ENCODE measurements at regions of chr3 and their contacts with region 1.

Region 1: DNA sequence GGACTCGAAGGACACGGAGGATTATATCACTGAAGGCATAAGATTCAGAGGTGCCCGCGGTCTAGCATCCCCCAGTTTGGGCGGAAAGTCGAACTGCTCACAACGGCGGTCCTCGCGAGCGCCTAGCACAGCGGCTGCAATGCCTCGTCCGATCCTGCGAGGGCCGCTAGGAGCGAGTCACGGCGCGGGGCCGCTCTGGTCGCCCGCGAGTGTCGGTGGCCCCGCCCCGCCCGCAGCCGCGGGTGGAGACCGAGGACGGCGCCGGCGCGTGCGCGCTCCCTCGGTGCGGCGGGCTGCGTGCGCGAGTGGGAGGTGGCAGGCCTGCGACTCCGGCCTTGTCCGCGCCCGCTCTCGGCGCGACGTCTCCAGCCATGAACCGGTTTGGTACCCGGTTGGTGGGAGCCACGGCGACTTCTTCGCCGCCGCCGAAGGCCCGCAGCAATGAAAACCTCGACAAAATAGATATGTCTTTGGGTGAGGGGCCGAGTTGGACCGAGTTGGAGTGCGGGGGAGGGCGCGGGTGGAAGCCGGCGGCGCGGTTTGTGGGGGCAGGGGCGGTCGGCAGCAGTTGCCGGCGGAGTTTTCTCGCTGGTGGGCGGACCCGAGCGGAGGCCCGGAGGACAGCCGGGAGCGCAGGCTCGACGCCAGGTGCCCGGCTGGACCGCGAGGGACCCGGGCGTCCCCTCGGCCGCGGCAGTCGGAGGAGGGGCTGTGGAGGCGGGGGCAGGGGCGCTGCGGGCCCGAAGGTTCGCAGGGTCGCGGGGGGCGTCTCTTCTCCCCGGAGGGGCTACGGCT is at the start of gene FYTTD1:
- DNase-seq: peak; percentile 95
- ATAC-seq: peak; percentile 91
- H3K4me3 Mint-ChIP-seq: peak within 1 kb of the TSS; percentile 97
- H3K27ac Mint-ChIP-seq: peak within 1 kb of the TSS; percentile 94
- H3K4me1 Mint-ChIP-seq: peaks cover 42% of the 10 kb centered on the region
- H3K27me3 Mint-ChIP-seq: no peaks in the 10 kb centered on the region
- CTCF ChIP-seq: no peak
- total RNA-seq, gene FYTTD1: 78.6 and 84.2 TPM in 2 replicates

Region 2: GRCh38 chr3:197599089-197599765 is 150.6 kb before region 1 on chr3:
- CTCF ChIA-PET with region 1: no interaction called
- POLR2A ChIA-PET with region 1: no interaction called
- intact Hi-C with region 1: loop called (anchors 1 kb)
- DNase-seq: peak; percentile 57
- ATAC-seq: peak; percentile 98
- H3K4me3 Mint-ChIP-seq: no peak overlapping the region
- H3K27ac Mint-ChIP-seq: no peak overlapping the region
- H3K4me1 Mint-ChIP-seq: peaks cover 9% of the 10 kb centered on the region
- H3K27me3 Mint-ChIP-seq: no peaks in the 10 kb centered on the region
- CTCF ChIP-seq: peak; percentile 21

Region 3: DNA sequence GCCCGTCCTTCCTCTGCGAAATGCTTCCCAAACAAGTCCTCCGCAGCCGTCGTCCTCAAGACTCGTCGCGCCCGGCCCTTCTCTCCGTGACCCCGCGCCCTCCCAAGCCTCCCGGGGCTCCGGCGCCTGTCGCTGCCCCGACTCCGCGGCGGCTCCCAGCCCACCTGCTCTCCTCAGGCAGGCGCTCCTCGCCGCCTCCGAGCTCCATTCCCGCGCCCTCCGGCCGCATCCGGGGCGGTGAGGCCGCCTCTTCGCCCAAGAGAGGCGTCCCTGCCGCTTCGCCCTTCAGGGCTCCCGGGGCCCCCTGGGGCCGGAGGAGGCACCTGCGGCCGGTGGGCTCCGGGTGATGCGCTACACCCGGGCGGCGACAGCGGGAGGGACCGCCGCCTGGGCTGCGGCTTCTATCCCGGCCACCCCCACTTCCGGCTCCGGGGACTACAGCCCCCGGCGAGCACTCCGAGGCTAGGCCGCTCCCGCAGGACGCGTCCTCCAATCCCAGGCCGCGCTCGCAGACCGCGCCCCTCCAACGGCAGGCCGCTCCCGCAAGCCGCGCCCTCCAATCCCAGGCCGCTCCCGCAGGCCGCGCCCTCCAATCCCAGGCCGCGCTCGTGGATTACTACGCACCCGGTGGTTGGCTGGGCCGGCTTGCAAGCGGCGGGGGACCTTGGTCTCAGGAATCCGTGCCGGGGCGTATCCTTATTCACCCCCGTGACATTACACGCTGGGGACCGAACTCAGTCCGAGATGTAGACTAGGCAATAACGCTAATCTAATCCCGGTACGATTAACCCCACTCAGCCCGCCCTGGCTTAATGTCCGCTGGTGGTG is 13.1 kb before region 1 on chr3 and contains the start of gene RUBCN:
- CTCF ChIA-PET with region 1: interaction called, 4 read pairs
- POLR2A ChIA-PET with region 1: interaction called, 61 read pairs
- intact Hi-C with region 1: loop called (anchors 1 kb)
- DNase-seq: peak; percentile 88
- ATAC-seq: peak; percentile 87
- H3K4me3 Mint-ChIP-seq: peak within 1 kb of the TSS; percentile 94
- H3K27ac Mint-ChIP-seq: peak within 1 kb of the TSS; percentile 98
- H3K4me1 Mint-ChIP-seq: peaks cover 58% of the 10 kb centered on the region
- H3K27me3 Mint-ChIP-seq: no peaks in the 10 kb centered on the region
- CTCF ChIP-seq: no peak
- total RNA-seq, gene RUBCN: 196 and 217 TPM in 2 replicates

Region 4: GRCh38 chr3:197782230-197782629 is 32.4 kb after region 1 on chr3:
- CTCF ChIA-PET with region 1: interaction called, 4 read pairs
- POLR2A ChIA-PET with region 1: interaction called, 8 read pairs
- intact Hi-C with region 1: loop called (anchors 2 kb)
- DNase-seq: no peak
- ATAC-seq: peak; percentile 91
- H3K4me3 Mint-ChIP-seq: peak overlapping the region; percentile 60
- H3K27ac Mint-ChIP-seq: peak overlapping the region; percentile 80
- H3K4me1 Mint-ChIP-seq: peaks cover 41% of the 10 kb centered on the region
- H3K27me3 Mint-ChIP-seq: no peaks in the 10 kb centered on the region
- CTCF ChIP-seq: no peak

Region 5: GRCh38 chr3:197791113-197791891 is 41.5 kb after region 1 on chr3 and contains the start of gene LRCH3:
- CTCF ChIA-PET with region 1: interaction called, 3 read pairs
- POLR2A ChIA-PET with region 1: interaction called, 35 read pairs
- intact Hi-C with region 1: loop called (anchors 1 kb)
- DNase-seq: peak; percentile 84
- ATAC-seq: peak; percentile 73
- H3K4me3 Mint-ChIP-seq: peak within 1 kb of the TSS; percentile 86
- H3K27ac Mint-ChIP-seq: peak within 1 kb of the TSS; percentile 97
- H3K4me1 Mint-ChIP-seq: peaks cover 63% of the 10 kb centered on the region
- H3K27me3 Mint-ChIP-seq: no peaks in the 10 kb centered on the region
- CTCF ChIP-seq: no peak
- total RNA-seq, gene LRCH3: 94.1 and 96.1 TPM in 2 replicates

Region 6: GRCh38 chr3:197847866-197848401 is 98.1 kb after region 1 on chr3:
- CTCF ChIA-PET with region 1: no interaction called
- POLR2A ChIA-PET with region 1: no interaction called
- intact Hi-C with region 1: loop called (anchors 5 kb)
- DNase-seq: no peak
- ATAC-seq: peak; percentile 96
- H3K4me3 Mint-ChIP-seq: peak overlapping the region; percentile 76
- H3K27ac Mint-ChIP-seq: peak overlapping the region; percentile 92
- H3K4me1 Mint-ChIP-seq: peaks cover 19% of the 10 kb centered on the region
- H3K27me3 Mint-ChIP-seq: no peaks in the 10 kb centered on the region
- CTCF ChIP-seq: no peak

Measured in activated B cell treated with CpG ODN at 0.5 μM for 24 hours (primary cell).